ENCODE measurements at regions of chr19 and their contacts with region 1.

Region 1: DNA sequence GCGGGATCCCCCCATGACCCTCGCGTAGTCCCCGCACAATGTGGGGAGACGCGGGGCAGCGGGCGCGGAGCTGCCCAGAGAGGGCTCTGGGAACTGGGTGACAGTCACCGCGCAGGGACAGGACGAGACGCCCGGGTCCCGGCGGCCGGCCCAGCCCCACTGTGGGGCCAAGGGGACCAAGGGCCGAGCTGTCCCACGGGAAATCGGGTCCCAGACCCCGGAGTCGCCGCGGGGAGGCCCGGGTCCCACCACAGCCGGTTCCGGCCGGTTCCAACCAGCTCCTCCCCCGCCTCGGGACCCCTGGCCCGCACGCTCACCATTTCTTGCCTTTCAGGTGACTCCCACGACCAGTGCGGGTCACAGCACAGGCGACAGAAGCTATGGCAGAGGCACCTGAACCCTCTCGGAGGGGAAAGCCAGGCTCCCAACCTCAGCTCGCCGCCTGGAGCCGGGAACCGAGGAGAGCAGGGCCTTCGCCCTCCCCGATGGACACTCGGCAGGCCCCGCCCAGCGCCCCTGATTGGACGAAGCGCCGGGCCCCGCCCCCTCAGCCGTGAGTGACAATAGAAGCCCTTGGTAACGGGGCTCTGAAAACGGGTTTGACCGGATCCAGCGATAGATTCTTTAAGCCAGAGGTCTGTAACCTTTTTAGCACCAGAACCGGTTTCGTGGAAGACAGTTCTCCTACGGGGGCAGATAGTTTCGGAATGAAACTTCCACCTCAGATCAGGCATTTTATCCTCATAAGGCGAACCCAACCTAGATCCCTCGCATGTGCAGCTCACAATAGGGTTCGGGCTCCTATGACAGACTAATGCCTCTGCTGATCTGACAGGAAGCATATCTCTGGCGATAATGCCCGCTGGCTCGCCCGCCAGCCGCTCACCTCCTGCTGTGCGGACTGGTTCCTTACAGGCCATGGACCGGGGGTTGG is at the start of gene ZNF433:
- DNase-seq: peak; percentile 98
- ATAC-seq: peak; percentile 99
- H3K4me3 ChIP-seq: peak within 1 kb of the TSS; percentile 89
- H3K27ac ChIP-seq: 0 out of 2 replicates have a peak within 1 kb of the TSS, but pooled peaks have one; percentile 14
- H3K4me1 ChIP-seq: peaks cover 10% of the 10 kb centered on the region
- H3K27me3 ChIP-seq: no peaks in the 10 kb centered on the region
- CTCF ChIP-seq: no peak
- total RNA-seq, gene ZNF433: 5.4 and 7.8 TPM in 2 replicates

Region 2: GRCh38 chr19:11142528-11143171 is 892.8 kb before region 1 on chr19:
- CTCF ChIA-PET with region 1: no interaction called
- POLR2A ChIA-PET with region 1: no interaction called
- intact Hi-C with region 1: no loop called
- DNase-seq: peak; percentile 99
- ATAC-seq: peak; percentile 53
- H3K4me3 ChIP-seq: peak overlapping the region; percentile 54; the same call in 1 of the 2 replicates
- H3K27ac ChIP-seq: peak overlapping the region; percentile 97
- H3K4me1 ChIP-seq: peaks cover 50% of the 10 kb centered on the region
- H3K27me3 ChIP-seq: no peaks in the 10 kb centered on the region
- CTCF ChIP-seq: no peak

Region 3: DNA sequence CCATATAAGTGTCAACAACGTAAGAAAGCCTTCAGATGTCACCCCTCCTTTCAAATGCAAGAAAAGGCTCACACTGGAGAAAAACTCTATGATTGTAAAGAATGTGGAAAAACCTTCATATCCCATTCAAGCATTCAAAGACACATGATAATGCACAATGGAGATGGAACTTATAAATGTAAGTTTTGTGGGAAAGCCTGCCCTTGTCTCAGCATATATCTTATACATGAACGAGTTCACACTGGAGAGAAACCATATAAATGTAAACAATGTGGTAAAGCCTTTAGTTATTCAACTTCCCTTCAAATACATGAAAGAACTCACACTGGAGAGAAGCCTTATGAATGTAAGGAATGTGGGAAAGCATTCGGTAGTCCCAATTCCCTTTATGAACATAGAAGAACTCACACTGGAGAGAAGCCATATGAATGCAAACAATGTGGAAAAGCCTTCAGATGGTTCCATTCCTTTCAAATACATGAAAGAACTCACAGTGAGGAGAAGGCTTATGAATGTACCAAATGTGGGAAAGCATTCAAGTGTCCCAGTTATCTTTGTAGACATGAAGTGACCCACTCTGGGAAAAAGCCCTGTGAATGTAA is 40.2 kb after region 1 on chr19:
- CTCF ChIA-PET with region 1: no interaction called
- POLR2A ChIA-PET with region 1: interaction called, 10 read pairs
- intact Hi-C with region 1: no loop called
- DNase-seq: no peak
- ATAC-seq: no peak
- H3K4me3 ChIP-seq: peak overlapping the region; percentile 18; the same call in 1 of the 2 replicates
- H3K27ac ChIP-seq: no peak overlapping the region
- H3K4me1 ChIP-seq: no peaks in the 10 kb centered on the region
- H3K27me3 ChIP-seq: no peaks in the 10 kb centered on the region
- CTCF ChIP-seq: no peak